Endothelial cell of umbilical vein (primary cell): ENCODE measurements at regions of chr12 and their contacts with region 1.

Region 1: GRCh38 chr12:120292661-120293531 is at the start of gene RNU4-1:
- DNase-seq: peak; percentile 89
- H3K4me3 ChIP-seq: peak within 1 kb of the TSS; percentile 22 to 64 (median 45)
- H3K27ac ChIP-seq: peak within 1 kb of the TSS; percentile 100
- H3K4me1 ChIP-seq: peaks cover 9% of the 10 kb centered on the region
- H3K27me3 ChIP-seq: no peaks in the 10 kb centered on the region
- CTCF ChIP-seq: no peak
- POLR2A ChIP-seq: peak; percentile 100
- total RNA-seq, gene RNU4-1: 2,141 and 7,155 TPM in 2 replicates

Region 2: GRCh38 chr12:120116792-120117651 is 175.9 kb before region 1 on chr12:
- CTCF ChIA-PET with region 1: no interaction called
- POLR2A ChIA-PET with region 1: interaction called, 20 read pairs
- dilution Hi-C with region 1: no loop called
- intact Hi-C with region 1: loop called (anchors 1 kb)
- DNase-seq: peak; percentile 96
- H3K4me3 ChIP-seq: peak overlapping the region; percentile 49 to 72 (median 63)
- H3K27ac ChIP-seq: peak overlapping the region; percentile 48
- H3K4me1 ChIP-seq: peaks cover 29% of the 10 kb centered on the region
- H3K27me3 ChIP-seq: no peaks in the 10 kb centered on the region
- CTCF ChIP-seq: no peak
- POLR2A ChIP-seq: peak; percentile 88

Region 3: GRCh38 chr12:120194534-120195395 is 98.1 kb before region 1 on chr12 and contains the start of gene GCN1:
- CTCF ChIA-PET with region 1: interaction called, 4 read pairs
- POLR2A ChIA-PET with region 1: interaction called, 141 read pairs
- dilution Hi-C with region 1: no loop called
- intact Hi-C with region 1: no loop called
- DNase-seq: peak; percentile 85
- H3K4me3 ChIP-seq: peak within 1 kb of the TSS; percentile 22 to 76 (median 67)
- H3K27ac ChIP-seq: peak within 1 kb of the TSS; percentile 74
- H3K4me1 ChIP-seq: peaks cover 48% of the 10 kb centered on the region
- H3K27me3 ChIP-seq: no peaks in the 10 kb centered on the region
- CTCF ChIP-seq: no peak
- POLR2A ChIP-seq: peak; percentile 59
- total RNA-seq, gene GCN1: 79.1 and 101 TPM in 2 replicates

Region 4: GRCh38 chr12:120234643-120235368 is 58.1 kb before region 1 on chr12:
- CTCF ChIA-PET with region 1: interaction called, 21 read pairs
- POLR2A ChIA-PET with region 1: interaction called, 211 read pairs
- dilution Hi-C with region 1: no loop called
- intact Hi-C with region 1: no loop called
- DNase-seq: peak; percentile 79
- H3K4me3 ChIP-seq: no peak overlapping the region
- H3K27ac ChIP-seq: peak overlapping the region; percentile 100
- H3K4me1 ChIP-seq: peaks cover 87% of the 10 kb centered on the region
- H3K27me3 ChIP-seq: no peaks in the 10 kb centered on the region
- CTCF ChIP-seq: peak; percentile 50 to 55
- POLR2A ChIP-seq: peak; percentile 22

Region 5: DNA sequence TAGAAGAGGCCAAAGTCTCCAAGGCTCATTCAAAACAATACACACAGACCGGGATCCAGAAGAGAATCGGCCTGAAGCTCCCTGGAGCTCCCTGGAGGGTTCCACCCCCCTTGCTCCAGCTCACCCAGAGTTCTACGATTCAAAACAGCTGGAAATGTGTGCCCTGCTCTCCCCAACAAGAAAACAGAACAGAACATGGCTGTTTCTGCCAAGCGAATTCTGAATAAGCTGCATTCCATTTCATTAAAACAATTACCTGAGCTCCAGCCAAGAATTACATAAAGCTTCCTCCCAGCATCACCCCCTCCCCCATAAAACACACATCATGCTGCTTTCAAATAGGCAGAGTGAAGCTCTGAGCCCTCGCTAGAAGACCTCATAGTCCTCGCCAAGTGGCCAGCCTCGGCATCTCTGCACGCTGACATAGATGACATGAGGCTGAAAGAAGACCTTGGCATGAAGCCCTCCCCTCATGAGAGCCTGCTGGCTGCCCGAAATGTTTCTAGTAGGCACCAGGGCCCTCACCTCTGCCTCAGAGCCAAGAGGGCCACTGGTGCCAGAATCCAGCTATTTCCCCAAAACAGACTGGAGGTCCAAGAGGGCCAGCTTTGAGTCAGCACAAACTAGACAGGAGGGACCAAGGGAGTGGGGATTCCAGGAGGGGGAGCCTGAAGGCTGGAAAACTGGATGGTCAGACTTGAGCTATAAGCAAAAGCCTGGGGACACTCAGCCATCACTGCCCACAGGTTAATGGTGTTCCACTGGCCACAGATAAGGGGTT is 35.7 kb before region 1 on chr12:
- CTCF ChIA-PET with region 1: interaction called, 5 read pairs
- POLR2A ChIA-PET with region 1: interaction called, 51 read pairs
- dilution Hi-C with region 1: no loop called
- intact Hi-C with region 1: no loop called
- DNase-seq: peak; percentile 98
- H3K4me3 ChIP-seq: no peak overlapping the region
- H3K27ac ChIP-seq: peak overlapping the region; percentile 96
- H3K4me1 ChIP-seq: peaks cover 71% of the 10 kb centered on the region
- H3K27me3 ChIP-seq: no peaks in the 10 kb centered on the region
- CTCF ChIP-seq: no peak
- POLR2A ChIP-seq: peak; percentile 24

Region 6: GRCh38 chr12:120928864-120929652 is 636.2 kb after region 1 on chr12:
- CTCF ChIA-PET with region 1: no interaction called
- POLR2A ChIA-PET with region 1: no interaction called
- dilution Hi-C with region 1: no loop called
- intact Hi-C with region 1: no loop called
- DNase-seq: no peak
- H3K4me3 ChIP-seq: no peak overlapping the region
- H3K27ac ChIP-seq: no peak overlapping the region
- H3K4me1 ChIP-seq: no peaks in the 10 kb centered on the region
- H3K27me3 ChIP-seq: no peaks in the 10 kb centered on the region
- CTCF ChIP-seq: no peak
- POLR2A ChIP-seq: no peak